ENCODE measurements at regions of chr3 and their contacts with region 1.

Region 1: GRCh38 chr3:44198284-44199269 is 43.1 kb upstream of the TOPAZ1 start:
- DNase-seq: peak; percentile 86
- H3K4me3 Mint-ChIP-seq: no peak overlapping the region
- H3K27ac Mint-ChIP-seq: no peak overlapping the region
- H3K4me1 Mint-ChIP-seq: peaks cover 11% of the 10 kb centered on the region
- H3K27me3 Mint-ChIP-seq: no peaks in the 10 kb centered on the region
- CTCF ChIP-seq: peak; percentile 83

Region 2: DNA sequence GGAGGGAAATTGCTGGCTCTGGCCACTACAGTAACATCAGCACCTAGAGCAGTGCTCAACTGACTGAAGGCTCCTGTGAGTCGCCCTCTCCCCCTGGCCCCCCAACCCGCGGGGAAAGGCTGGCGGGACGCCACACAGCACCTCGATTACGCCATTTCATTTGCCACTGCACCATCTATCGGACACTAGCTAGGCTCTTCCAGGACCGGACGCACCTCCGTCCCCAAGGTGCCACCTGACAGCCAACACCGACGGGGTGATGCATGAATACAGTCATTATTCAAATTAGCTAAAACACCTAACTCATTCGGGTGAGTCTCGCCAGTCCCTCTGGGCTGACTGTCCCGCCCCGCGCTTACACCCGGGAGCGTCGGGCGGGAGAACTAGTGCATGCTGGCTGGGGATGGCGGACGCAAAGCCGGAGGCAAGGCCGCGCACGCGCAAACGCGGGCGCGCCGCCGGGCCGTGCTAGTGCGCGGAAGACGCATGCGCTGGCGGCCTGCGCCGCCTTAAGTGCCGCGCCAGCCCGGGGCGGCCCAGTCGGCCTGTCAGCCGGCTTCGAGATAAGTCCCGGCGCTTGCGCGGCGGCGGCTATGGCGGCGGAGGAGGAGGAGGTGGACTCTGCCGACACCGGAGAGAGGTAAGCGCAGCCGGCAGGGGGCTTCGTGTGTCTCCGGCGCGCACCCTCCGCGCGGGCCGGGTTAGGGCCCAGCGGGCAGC is 508.0 kb before region 1 on chr3 and contains the start of gene ABHD5:
- CTCF ChIA-PET with region 1: no interaction called
- POLR2A ChIA-PET with region 1: no interaction called
- intact Hi-C with region 1: loop called (anchors 5 kb)
- DNase-seq: peak; percentile 93
- H3K4me3 Mint-ChIP-seq: peak within 1 kb of the TSS; percentile 90
- H3K27ac Mint-ChIP-seq: peak within 1 kb of the TSS; percentile 88
- H3K4me1 Mint-ChIP-seq: peaks cover 41% of the 10 kb centered on the region
- H3K27me3 Mint-ChIP-seq: no peaks in the 10 kb centered on the region
- CTCF ChIP-seq: peak; percentile 17
- total RNA-seq, gene ABHD5: 30.3 and 32.6 TPM in 2 replicates

Region 3: DNA sequence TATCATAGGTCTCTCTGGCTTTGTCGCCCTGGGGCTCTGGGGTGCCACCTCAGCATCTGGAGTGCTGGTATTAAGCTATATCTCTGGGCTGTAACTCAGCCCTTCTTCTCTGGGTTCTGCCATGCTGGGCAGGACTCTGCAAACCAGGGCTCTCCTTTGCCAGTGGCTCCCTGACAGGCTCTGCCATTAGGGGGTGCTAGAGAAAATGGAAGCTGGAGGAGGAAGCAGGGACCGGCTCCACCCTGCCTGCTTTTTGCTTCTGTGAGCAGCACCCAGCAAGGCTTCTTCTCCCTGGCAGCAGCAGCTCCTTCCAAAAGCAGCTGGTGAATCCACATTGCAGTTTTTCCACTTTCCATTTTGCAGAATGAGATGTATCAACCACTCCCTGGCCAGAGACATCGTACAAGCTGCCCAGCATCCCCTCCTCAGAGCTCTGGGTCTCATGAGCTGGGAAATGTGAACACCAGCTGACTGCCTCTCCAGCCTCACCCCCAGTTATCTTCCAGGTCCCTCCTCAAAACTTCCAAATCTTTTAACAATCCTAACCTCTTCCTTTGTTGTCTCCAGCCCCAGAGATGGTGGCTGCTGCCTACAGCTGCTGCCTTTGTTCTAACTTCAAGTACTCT is 342.8 kb before region 1 on chr3:
- CTCF ChIA-PET with region 1: no interaction called
- POLR2A ChIA-PET with region 1: no interaction called
- intact Hi-C with region 1: loop called (anchors 1 kb)
- DNase-seq: peak; percentile 83
- H3K4me3 Mint-ChIP-seq: no peak overlapping the region
- H3K27ac Mint-ChIP-seq: no peak overlapping the region
- H3K4me1 Mint-ChIP-seq: peaks cover 22% of the 10 kb centered on the region
- H3K27me3 Mint-ChIP-seq: peaks cover 11% of the 10 kb centered on the region
- CTCF ChIP-seq: peak; percentile 43

Region 4: GRCh38 chr3:43998836-43999727 is 199.5 kb before region 1 on chr3:
- CTCF ChIA-PET with region 1: no interaction called
- POLR2A ChIA-PET with region 1: no interaction called
- intact Hi-C with region 1: loop called (anchors 1 kb)
- DNase-seq: peak; percentile 69
- H3K4me3 Mint-ChIP-seq: peak overlapping the region; percentile 75
- H3K27ac Mint-ChIP-seq: no peak overlapping the region
- H3K4me1 Mint-ChIP-seq: peaks cover 29% of the 10 kb centered on the region
- H3K27me3 Mint-ChIP-seq: peaks cover 32% of the 10 kb centered on the region
- CTCF ChIP-seq: no peak

Region 5: GRCh38 chr3:44323341-44323955 is 124.9 kb after region 1 on chr3:
- CTCF ChIA-PET with region 1: no interaction called
- POLR2A ChIA-PET with region 1: no interaction called
- intact Hi-C with region 1: no loop called
- DNase-seq: peak; percentile 73
- H3K4me3 Mint-ChIP-seq: no peak overlapping the region
- H3K27ac Mint-ChIP-seq: no peak overlapping the region
- H3K4me1 Mint-ChIP-seq: no peaks in the 10 kb centered on the region
- H3K27me3 Mint-ChIP-seq: no peaks in the 10 kb centered on the region
- CTCF ChIP-seq: peak; percentile 70